ENCODE measurements at regions of chr7 and their contacts with region 1.

Region 1: GRCh38 chr7:77415823-77416622 is at the start of gene GSAP:
- DNase-seq: peak; percentile 86
- ATAC-seq: peak; percentile 60
- H3K4me3 ChIP-seq: peak within 1 kb of the TSS; percentile 71 to 83 (median 77)
- H3K4me3 Mint-ChIP-seq: peak within 1 kb of the TSS; percentile 82
- H3K27ac ChIP-seq: peak within 1 kb of the TSS; percentile 94 to 96
- H3K27ac Mint-ChIP-seq: peak within 1 kb of the TSS; percentile 93
- H3K4me1 ChIP-seq: peaks cover 39 to 42% of the 10 kb centered on the region in 2 donors
- H3K4me1 Mint-ChIP-seq: peaks cover 60% of the 10 kb centered on the region
- H3K27me3 ChIP-seq: no peaks in the 10 kb centered on the region
- H3K27me3 Mint-ChIP-seq: no peaks in the 10 kb centered on the region
- CTCF ChIP-seq: peak; percentile 16
- total RNA-seq, gene GSAP: 200 and 207 TPM in 2 replicates

Region 2: GRCh38 chr7:77199013-77199966 is 216.7 kb before region 1 on chr7 and contains the start of gene FGL2:
- CTCF ChIA-PET with region 1: no interaction called
- POLR2A ChIA-PET with region 1: no interaction called
- intact Hi-C with region 1: loop called (anchors 5 kb)
- DNase-seq: peak; percentile 37
- ATAC-seq: peak; percentile 53
- H3K4me3 ChIP-seq: peak within 1 kb of the TSS; percentile 45 to 85 (median 59)
- H3K4me3 Mint-ChIP-seq: peak within 1 kb of the TSS; percentile 87
- H3K27ac ChIP-seq: peak within 1 kb of the TSS; percentile 66 to 83
- H3K27ac Mint-ChIP-seq: peak within 1 kb of the TSS; percentile 91
- H3K4me1 ChIP-seq: peaks cover 32 to 37% of the 10 kb centered on the region in 2 donors
- H3K4me1 Mint-ChIP-seq: peaks cover 67% of the 10 kb centered on the region
- H3K27me3 ChIP-seq: no peaks in the 10 kb centered on the region
- H3K27me3 Mint-ChIP-seq: no peaks in the 10 kb centered on the region
- CTCF ChIP-seq: no peak
- total RNA-seq, gene FGL2: 6.5 and 7.0 TPM in 2 replicates

Region 3: DNA sequence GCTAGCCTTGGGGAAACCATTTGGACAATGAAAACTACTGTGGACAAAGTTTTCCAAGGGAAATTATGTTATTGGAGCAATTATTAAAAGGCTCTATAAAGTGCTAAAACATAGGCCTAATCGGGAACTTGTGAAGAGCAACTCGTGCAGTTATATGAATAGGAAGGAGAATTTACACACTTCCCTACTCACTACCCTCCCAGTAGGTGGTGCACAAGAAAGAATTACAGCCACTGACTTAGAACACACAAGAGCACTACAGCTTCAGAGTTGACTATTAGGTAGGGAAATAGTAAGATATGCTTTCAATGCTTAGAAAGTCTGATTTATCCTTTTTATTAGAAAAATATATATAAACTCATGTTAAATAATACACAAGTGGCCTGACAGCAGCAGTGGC is 47.0 kb before region 1 on chr7:
- CTCF ChIA-PET with region 1: interaction called, 11 read pairs
- POLR2A ChIA-PET with region 1: interaction called, 10 read pairs
- intact Hi-C with region 1: no loop called
- DNase-seq: no peak
- ATAC-seq: peak; percentile 66
- H3K4me3 ChIP-seq: no peak overlapping the region
- H3K4me3 Mint-ChIP-seq: no peak overlapping the region
- H3K27ac ChIP-seq: no peak overlapping the region
- H3K27ac Mint-ChIP-seq: no peak overlapping the region
- H3K4me1 ChIP-seq: no peaks in the 10 kb centered on the region
- H3K4me1 Mint-ChIP-seq: peaks cover 9% of the 10 kb centered on the region
- H3K27me3 ChIP-seq: no peaks in the 10 kb centered on the region
- H3K27me3 Mint-ChIP-seq: no peaks in the 10 kb centered on the region
- CTCF ChIP-seq: peak; percentile 29

Region 4: DNA sequence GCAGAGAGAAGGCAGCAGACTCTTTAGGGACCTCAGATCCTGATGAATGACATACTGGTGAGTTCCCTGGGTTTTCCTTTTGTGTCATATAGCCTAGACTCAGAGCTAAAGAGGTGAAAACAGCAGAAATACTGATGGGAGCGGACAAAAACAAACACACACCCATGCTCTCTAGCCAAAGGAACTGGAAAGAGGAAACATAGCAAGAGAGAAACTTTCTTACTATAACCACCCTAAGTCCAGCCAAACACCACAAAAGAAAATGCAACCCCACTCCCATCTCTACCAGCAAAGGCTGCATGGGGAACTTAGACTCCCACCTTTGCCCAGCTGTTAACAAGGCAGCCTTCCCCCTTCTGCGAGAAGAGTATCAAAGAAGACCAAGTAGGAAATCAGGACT is 16.2 kb before region 1 on chr7:
- CTCF ChIA-PET with region 1: interaction called, 17 read pairs
- POLR2A ChIA-PET with region 1: interaction called, 7 read pairs
- intact Hi-C with region 1: loop called (anchors 2 kb)
- DNase-seq: no peak
- ATAC-seq: no peak
- H3K4me3 ChIP-seq: no peak overlapping the region
- H3K4me3 Mint-ChIP-seq: peak overlapping the region; percentile 58
- H3K27ac ChIP-seq: peak overlapping the region in 1 of 2 donors; percentile 25
- H3K27ac Mint-ChIP-seq: peak overlapping the region; percentile 84
- H3K4me1 ChIP-seq: peaks cover 19 to 23% of the 10 kb centered on the region in 2 donors
- H3K4me1 Mint-ChIP-seq: peaks cover 45% of the 10 kb centered on the region
- H3K27me3 ChIP-seq: no peaks in the 10 kb centered on the region
- H3K27me3 Mint-ChIP-seq: no peaks in the 10 kb centered on the region
- CTCF ChIP-seq: no peak

Region 5: GRCh38 chr7:77696198-77697028 is 280.4 kb after region 1 on chr7 and contains the start of gene RSBN1L:
- CTCF ChIA-PET with region 1: no interaction called
- POLR2A ChIA-PET with region 1: interaction called, 5 read pairs
- intact Hi-C with region 1: loop called (anchors 2 kb)
- DNase-seq: peak; percentile 97
- ATAC-seq: peak; percentile 94
- H3K4me3 ChIP-seq: peak within 1 kb of the TSS; percentile 72 to 100 (median 84)
- H3K4me3 Mint-ChIP-seq: peak within 1 kb of the TSS; percentile 98
- H3K27ac ChIP-seq: peak within 1 kb of the TSS; percentile 89 to 90
- H3K27ac Mint-ChIP-seq: peak within 1 kb of the TSS; percentile 97
- H3K4me1 ChIP-seq: peaks cover 20 to 35% of the 10 kb centered on the region in 2 donors
- H3K4me1 Mint-ChIP-seq: peaks cover 54% of the 10 kb centered on the region
- H3K27me3 ChIP-seq: no peaks in the 10 kb centered on the region
- H3K27me3 Mint-ChIP-seq: no peaks in the 10 kb centered on the region
- CTCF ChIP-seq: peak; percentile 61
- total RNA-seq, gene RSBN1L: 47.0 and 55.0 TPM in 2 replicates

Region 6: GRCh38 chr7:77823787-77824186 is 407.8 kb after region 1 on chr7:
- CTCF ChIA-PET with region 1: no interaction called
- POLR2A ChIA-PET with region 1: no interaction called
- intact Hi-C with region 1: loop called (anchors 1 kb)
- DNase-seq: no peak
- ATAC-seq: peak; percentile 34
- H3K4me3 ChIP-seq: peak overlapping the region; percentile 9 to 71 (median 38)
- H3K4me3 Mint-ChIP-seq: peak overlapping the region; percentile 86
- H3K27ac ChIP-seq: peak overlapping the region; percentile 87 to 90
- H3K27ac Mint-ChIP-seq: peak overlapping the region; percentile 98
- H3K4me1 ChIP-seq: peaks cover 58 to 66% of the 10 kb centered on the region in 2 donors
- H3K4me1 Mint-ChIP-seq: peaks cover 70% of the 10 kb centered on the region
- H3K27me3 ChIP-seq: no peaks in the 10 kb centered on the region
- H3K27me3 Mint-ChIP-seq: no peaks in the 10 kb centered on the region
- CTCF ChIP-seq: no peak